SK-N-SH (cell line): ENCODE measurements at regions of chr3 and their contacts with region 1.

Region 1: DNA sequence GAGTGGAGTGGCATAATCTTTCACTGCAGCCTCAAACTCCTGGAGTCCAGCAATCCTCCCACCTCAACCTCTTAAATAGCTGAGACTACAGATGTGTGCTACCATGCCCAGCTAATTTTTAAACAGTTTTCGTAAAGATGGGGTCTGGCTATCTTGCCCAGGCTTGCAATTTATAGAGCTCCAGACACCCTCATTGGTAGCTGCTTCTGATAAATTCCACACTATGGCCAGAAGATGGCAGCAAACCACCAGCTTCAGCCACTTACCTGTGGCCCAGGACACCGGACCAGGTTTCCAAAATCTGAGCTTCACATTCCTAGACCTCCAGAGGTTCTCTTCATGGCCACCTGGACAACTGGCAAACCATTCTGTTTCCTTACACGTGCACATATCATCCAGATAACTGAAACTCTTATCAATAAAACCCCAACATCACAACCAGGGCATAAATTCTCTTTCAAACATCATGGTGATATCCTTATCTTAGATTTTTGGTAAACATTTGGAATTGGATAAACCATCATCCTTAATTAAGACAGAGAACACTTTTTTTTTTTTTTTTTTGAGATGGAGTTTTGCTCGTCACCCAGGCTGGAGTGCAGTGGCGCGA is 28.9 kb downstream of the FBXW12 start:
- DNase-seq: peak; percentile 81
- H3K4me3 ChIP-seq: no peak overlapping the region
- H3K27ac ChIP-seq: no peak overlapping the region; a peak in 1 of 4 replicates
- H3K4me1 ChIP-seq: peaks cover 6 to 23% of the 10 kb centered on the region in 2 experiments; a peak in 2 of 4 replicates
- H3K27me3 ChIP-seq: no peaks in the 10 kb centered on the region
- CTCF ChIP-seq: peak; percentile 82
- EP300 ChIP-seq: no peak
- RAD21 ChIP-seq: peak; percentile 86

Region 2: GRCh38 chr3:48273594-48274211 is 127.2 kb before region 1 on chr3:
- CTCF ChIA-PET with region 1: interaction called, 43 read pairs
- POLR2A ChIA-PET with region 1: interaction called, 3 read pairs
- DNase-seq: peak; percentile 85
- H3K4me3 ChIP-seq: no peak overlapping the region; a peak in 1 of 4 replicates
- H3K27ac ChIP-seq: no peak overlapping the region
- H3K4me1 ChIP-seq: no peaks in the 10 kb centered on the region; a peak in 1 of 4 replicates
- H3K27me3 ChIP-seq: no peaks in the 10 kb centered on the region
- CTCF ChIP-seq: peak; percentile 81
- EP300 ChIP-seq: no peak
- RAD21 ChIP-seq: peak; percentile 95

Region 3: DNA sequence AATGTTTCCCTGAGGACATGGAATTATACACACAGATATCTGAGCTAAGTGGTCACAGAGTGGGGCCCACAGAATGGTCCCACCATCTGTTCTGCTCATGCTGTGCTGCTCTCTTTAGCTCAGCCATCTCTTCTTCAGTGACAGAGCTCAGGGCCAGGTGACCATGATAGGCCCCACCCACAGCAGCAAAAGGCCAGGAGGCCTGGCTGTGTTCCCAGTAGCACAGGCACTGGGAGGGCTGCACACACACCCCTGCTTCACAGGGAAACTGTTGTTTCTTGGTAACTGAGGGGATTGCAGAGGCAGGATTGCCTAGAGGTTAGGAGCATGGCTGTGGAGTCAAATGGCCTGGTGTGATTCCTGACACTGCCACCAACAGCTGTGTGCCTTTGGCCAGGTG is 33.7 kb before region 1 on chr3:
- CTCF ChIA-PET with region 1: interaction called, 15 read pairs
- POLR2A ChIA-PET with region 1: no interaction called
- DNase-seq: peak; percentile 69
- H3K4me3 ChIP-seq: no peak overlapping the region
- H3K27ac ChIP-seq: peak overlapping the region in 1 of 2 experiments; percentile 74; a peak in 2 of 4 replicates
- H3K4me1 ChIP-seq: peaks cover 0 to 15% of the 10 kb centered on the region in 2 experiments; a peak in 1 of 4 replicates
- H3K27me3 ChIP-seq: no peaks in the 10 kb centered on the region
- CTCF ChIP-seq: no peak
- EP300 ChIP-seq: peak in 1 of 2 experiments; percentile 15; a peak in 1 of 4 replicates
- RAD21 ChIP-seq: no peak; the same call in 1 of the 2 replicates

Region 4: DNA sequence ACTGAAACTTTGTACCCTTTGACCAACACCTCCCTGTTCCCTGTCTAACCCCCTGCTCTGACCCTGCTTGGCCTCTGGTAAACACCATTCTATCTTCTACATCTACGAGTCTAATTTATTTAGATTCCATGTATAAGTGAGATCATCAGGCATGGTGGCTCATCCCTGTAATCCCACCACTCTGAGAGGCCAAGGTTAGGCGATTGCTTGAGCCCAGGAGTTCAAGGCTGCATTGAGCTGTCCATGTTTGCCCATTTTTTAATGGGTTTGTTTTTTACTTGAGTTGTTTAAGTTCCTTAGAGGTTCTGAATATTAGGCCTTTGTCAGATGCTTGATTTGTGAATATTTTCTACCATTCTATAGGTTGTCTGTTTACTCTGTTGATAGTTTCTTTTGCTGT is 12.0 kb before region 1 on chr3:
- CTCF ChIA-PET with region 1: interaction called, 23 read pairs
- POLR2A ChIA-PET with region 1: no interaction called
- DNase-seq: no peak
- H3K4me3 ChIP-seq: no peak overlapping the region
- H3K27ac ChIP-seq: no peak overlapping the region
- H3K4me1 ChIP-seq: no peaks in the 10 kb centered on the region
- H3K27me3 ChIP-seq: no peaks in the 10 kb centered on the region; the same call in 1 of the 2 replicates
- CTCF ChIP-seq: no peak
- EP300 ChIP-seq: no peak
- RAD21 ChIP-seq: no peak

Region 5: GRCh38 chr3:48422270-48422669 is 21.3 kb after region 1 on chr3:
- CTCF ChIA-PET with region 1: interaction called, 399 read pairs
- POLR2A ChIA-PET with region 1: no interaction called
- DNase-seq: no peak
- H3K4me3 ChIP-seq: no peak overlapping the region
- H3K27ac ChIP-seq: no peak overlapping the region; a peak in 1 of 4 replicates
- H3K4me1 ChIP-seq: peaks cover 0 to 45% of the 10 kb centered on the region in 2 experiments; a peak in 2 of 4 replicates
- H3K27me3 ChIP-seq: no peaks in the 10 kb centered on the region
- CTCF ChIP-seq: 0 out of 2 replicates have a peak, but pooled peaks have one; percentile 13
- EP300 ChIP-seq: no peak
- RAD21 ChIP-seq: no peak